GM18951 (cell line): ENCODE measurements at regions of chr2 and their contacts with region 1.

Region 1: GRCh38 chr2:196725882-196726281 is 73.6 kb downstream of the GTF3C3 start:
- POLR2A ChIP-seq: no peak

Region 2: DNA sequence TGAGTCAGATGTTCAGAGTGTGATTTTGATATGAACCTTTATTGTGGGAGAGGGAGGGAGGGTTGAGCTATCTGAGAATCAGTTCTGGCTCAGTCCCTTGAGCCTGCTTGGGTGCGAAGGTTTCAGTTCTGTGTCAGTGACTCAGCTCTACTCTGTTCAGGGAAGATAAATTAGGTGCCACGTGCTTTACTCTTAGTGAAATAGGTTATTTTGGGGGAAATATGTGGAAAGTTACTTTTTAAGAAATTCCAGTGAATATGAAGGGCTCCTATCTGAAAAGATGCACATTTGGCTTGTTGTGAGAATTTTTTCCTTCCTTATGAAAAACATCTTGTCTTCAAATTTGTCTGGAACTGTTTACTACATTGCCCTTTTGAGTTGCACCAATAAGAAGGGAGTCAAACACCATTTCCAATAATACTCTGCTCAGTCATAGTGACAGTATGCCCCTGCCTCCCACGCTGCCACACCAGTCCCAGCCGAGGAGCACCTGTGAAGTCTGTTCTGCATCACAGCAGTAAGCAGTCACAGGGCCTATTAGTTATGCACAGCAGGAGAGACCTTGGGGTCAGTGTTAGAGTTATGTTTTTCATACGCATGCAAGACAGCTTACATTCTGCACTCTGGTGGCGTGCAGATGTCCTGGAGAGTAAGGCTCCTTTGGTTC is 624.4 kb before region 1 on chr2:
- in situ Hi-C with region 1: loop called (anchors 10 kb)
- POLR2A ChIP-seq: no peak